HEK293 (cell line): ENCODE measurements at regions of chrX and their contacts with region 1.

Region 1: DNA sequence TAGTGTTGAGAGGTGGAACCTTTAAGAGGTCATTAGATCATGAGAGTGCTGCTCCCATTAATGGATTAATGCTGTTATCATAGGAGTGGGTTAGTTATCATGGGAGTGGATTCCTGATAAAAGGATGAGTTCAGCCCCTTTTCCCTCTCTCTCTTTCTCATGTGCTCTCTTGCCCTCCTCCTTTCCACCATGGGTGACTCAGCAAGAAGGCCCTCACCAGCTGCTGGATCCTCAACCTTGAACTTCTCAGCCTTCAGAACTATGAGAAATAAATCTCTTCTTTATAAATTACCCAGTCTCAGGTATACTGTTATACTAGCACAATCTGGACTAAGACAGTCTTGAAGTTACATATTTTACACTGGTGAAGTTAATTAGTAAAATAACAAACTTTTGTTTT is 10.0 kb upstream of the CDKL5 start:
- H3K4me3 ChIP-seq: no peak overlapping the region
- H3K27ac ChIP-seq: no peak overlapping the region
- H3K4me1 ChIP-seq: no peaks in the 10 kb centered on the region
- CTCF ChIP-seq: no peak

Region 2: GRCh38 chrX:18294893-18295292 is 120.5 kb before region 1 on chrX:
- CTCF ChIA-PET with region 1: no interaction called
- POLR2A ChIA-PET with region 1: no interaction called
- H3K4me3 ChIP-seq: no peak overlapping the region
- H3K27ac ChIP-seq: no peak overlapping the region
- H3K4me1 ChIP-seq: 0 out of 2 replicates have a peak, but pooled peaks cover 3% of the 10 kb centered on the region
- CTCF ChIP-seq: no peak

Region 3: DNA sequence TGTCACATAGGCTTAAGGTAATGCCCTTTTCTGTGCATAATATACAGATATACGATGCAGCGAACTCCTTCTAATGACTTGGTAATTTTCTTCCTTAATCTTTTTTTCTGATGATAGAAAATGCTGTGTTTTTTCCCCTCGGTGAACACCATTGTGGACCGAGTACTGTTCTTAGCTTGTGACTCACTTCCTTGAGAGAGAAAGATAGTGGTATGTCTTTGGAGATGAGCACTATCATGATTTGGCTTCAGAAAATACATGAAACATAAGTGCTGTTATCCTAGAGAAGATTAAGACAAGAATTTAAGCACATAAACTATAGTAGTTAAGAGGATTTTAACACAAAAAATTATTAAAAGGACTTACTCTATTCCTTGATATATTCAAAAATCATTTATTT is 192.6 kb after region 1 on chrX:
- CTCF ChIA-PET with region 1: interaction called, 11 read pairs
- POLR2A ChIA-PET with region 1: no interaction called
- H3K4me3 ChIP-seq: no peak overlapping the region
- H3K27ac ChIP-seq: no peak overlapping the region
- H3K4me1 ChIP-seq: no peaks in the 10 kb centered on the region
- CTCF ChIP-seq: no peak